Activated CD4-positive, alpha-beta T cell treated with anti-CD3 and anti-CD28 coated beads, Interleukin-2, amount 10 ng/mL, durations not matched to agents 7 days and 5 days (primary cell): ENCODE measurements at regions of chr6 and their contacts with region 1.

Region 1: DNA sequence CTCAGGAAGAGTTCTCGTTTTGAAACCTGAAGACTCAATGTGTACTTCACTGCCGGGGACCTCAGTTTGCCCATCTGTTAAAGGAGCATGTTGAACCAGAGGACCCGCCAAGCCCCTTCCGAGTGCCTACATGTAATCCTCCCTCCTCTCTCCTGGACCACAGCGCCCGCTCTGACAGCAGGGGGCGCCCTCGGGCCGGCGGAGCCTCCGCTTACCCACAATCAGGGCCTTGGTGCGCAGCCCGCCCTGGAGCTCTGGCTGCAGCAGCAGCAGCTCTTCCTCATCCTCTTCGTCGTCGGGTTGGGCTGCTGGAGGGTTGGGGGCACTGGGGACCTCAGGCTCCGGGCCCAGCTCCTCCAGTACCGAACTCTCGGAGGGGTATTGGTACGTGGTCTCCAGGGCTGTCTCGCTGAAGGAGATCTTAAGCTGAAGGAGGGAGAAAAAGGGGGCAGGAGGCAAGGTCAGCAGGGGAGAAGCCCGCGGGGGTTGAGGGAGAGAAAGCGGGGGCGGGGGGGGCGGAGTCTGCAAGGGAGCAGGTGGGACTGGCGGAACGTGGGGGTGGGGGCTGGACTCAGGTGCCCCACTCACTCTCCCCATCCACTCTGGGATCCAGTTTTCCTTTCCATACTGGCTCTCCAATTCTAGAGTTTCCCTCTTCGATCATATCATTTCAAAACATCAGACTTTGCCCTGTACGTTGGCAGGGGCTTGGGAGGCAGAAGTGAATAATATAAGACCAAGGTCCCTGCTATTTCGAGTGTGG is 6.3 kb upstream of the DHX16 start:
- DNase-seq: peak; percentile 92
- H3K4me3 Mint-ChIP-seq: peak overlapping the region; percentile 100
- H3K27ac Mint-ChIP-seq: peak overlapping the region; percentile 73
- H3K4me1 Mint-ChIP-seq: peaks cover 29% of the 10 kb centered on the region
- H3K27me3 Mint-ChIP-seq: no peaks in the 10 kb centered on the region

Region 2: DNA sequence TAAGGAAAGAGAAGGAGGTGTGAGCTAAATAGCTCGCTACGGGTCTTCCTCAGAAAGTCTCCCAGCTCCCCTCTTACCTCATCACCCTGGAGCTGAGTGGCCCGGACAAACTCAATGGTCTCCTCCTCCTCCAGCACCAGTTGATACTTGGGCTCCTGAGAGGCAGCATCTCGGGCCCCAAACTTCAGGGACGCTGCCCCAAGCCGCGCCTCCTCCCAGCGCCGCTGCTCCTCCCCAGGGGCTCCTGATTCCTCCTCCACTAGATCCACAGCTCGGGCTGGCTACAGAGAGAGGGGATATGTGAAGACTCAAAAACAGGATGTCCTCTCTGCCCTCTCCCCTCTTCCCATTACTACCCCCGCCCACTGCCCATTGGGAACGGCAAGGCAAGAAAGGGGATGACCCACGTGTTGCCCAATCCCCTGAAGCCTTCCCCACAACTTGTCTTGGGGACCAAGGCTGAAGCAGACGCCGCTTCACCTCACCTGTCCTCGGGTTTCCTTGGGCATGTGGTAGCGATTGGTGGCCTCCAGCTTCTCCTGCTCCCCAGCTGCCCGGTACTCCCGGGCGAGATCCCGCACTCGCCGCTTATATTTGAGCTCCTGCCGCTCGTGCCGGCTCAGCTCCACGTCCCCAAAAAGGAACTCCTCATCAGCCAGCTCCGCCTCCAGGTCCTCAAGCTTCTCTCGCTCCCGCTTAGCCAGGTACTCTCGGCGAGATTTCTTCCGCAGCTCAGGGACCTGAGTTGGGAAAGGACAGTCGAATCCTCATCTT is 14.0 kb before region 1 on chr6:
- CTCF ChIA-PET with region 1: interaction called, 15 read pairs
- POLR2A ChIA-PET with region 1: no interaction called
- DNase-seq: no peak
- H3K4me3 Mint-ChIP-seq: no peak overlapping the region
- H3K27ac Mint-ChIP-seq: no peak overlapping the region
- H3K4me1 Mint-ChIP-seq: peaks cover 19% of the 10 kb centered on the region
- H3K27me3 Mint-ChIP-seq: no peaks in the 10 kb centered on the region

Region 3: GRCh38 chr6:30700340-30700739 is 21.2 kb after region 1 on chr6:
- CTCF ChIA-PET with region 1: interaction called, 14 read pairs
- POLR2A ChIA-PET with region 1: no interaction called
- DNase-seq: no peak
- H3K4me3 Mint-ChIP-seq: no peak overlapping the region
- H3K27ac Mint-ChIP-seq: no peak overlapping the region
- H3K4me1 Mint-ChIP-seq: no peaks in the 10 kb centered on the region
- H3K27me3 Mint-ChIP-seq: no peaks in the 10 kb centered on the region

Region 4: DNA sequence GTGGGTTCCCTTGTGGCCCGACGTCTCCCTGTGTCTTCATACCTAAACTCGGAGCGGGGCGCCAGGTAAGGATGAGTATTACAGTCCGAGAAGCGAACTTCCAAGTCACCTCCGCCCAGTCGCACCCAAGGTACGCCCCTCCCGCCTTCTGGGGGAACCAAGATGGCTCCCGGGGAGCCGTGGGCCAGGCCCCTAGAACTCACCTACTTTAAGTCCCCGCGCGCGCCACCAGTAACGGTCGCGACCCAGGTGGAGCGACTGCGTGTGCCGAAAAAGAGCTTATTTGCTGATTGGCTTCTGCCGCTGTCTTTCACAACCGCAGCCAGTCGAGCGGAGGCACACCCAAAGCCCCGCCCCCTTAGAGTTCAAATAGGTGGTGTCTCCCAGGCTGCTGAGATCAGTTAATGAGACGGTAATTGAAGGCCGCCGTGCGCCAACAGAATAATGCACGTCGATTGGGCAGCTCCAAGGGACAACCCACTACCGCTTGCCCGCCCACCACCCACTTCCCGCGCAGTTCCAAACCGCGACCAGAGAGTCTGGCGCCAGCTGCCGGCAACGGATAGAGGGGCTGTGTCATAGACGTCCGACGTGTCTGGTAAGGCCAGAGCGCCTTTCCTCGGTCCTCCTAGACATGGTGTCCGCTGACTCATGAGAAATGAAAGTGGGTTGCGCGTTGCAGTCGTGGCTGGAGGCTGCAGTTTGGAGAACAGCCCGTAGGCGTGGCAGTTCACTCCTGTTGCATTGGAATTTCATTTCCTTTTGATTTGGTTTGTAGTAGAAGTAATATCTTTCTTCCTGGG is 38.1 kb after region 1 on chr6 and contains the start of gene MDC1:
- CTCF ChIA-PET with region 1: interaction called, 476 read pairs
- POLR2A ChIA-PET with region 1: interaction called, 16 read pairs
- DNase-seq: peak; percentile 100
- H3K4me3 Mint-ChIP-seq: peak within 1 kb of the TSS; percentile 97
- H3K27ac Mint-ChIP-seq: peak within 1 kb of the TSS; percentile 98
- H3K4me1 Mint-ChIP-seq: peaks cover 58% of the 10 kb centered on the region
- H3K27me3 Mint-ChIP-seq: no peaks in the 10 kb centered on the region
- total RNA-seq, gene MDC1: 46.8 to 53.2 TPM